Dorsolateral prefrontal cortex (tissue), 120 donors: ENCODE measurements at regions of chr9 and their contacts with region 1.

Region 1: GRCh38 chr9:36543916-36544315 is 28.8 kb upstream of the MELK start:
- DNase-seq: no peak
- H3K4me3 ChIP-seq: no peak overlapping the region
- H3K27ac ChIP-seq: no peak overlapping the region
- H3K27me3 ChIP-seq: no peaks in the 10 kb centered on the region
- CTCF ChIP-seq: no peak

Region 2: GRCh38 chr9:36499174-36499890 is 44.6 kb before region 1 on chr9:
- intact Hi-C with region 1: loop called (anchors 10 kb)
- DNase-seq: no peak
- H3K4me3 ChIP-seq: no peak overlapping the region
- H3K27ac ChIP-seq: no peak overlapping the region
- H3K27me3 ChIP-seq: no peaks in the 10 kb centered on the region
- CTCF ChIP-seq: no peak